ENCODE measurements at regions of chr17 and their contacts with region 1.

Region 1: DNA sequence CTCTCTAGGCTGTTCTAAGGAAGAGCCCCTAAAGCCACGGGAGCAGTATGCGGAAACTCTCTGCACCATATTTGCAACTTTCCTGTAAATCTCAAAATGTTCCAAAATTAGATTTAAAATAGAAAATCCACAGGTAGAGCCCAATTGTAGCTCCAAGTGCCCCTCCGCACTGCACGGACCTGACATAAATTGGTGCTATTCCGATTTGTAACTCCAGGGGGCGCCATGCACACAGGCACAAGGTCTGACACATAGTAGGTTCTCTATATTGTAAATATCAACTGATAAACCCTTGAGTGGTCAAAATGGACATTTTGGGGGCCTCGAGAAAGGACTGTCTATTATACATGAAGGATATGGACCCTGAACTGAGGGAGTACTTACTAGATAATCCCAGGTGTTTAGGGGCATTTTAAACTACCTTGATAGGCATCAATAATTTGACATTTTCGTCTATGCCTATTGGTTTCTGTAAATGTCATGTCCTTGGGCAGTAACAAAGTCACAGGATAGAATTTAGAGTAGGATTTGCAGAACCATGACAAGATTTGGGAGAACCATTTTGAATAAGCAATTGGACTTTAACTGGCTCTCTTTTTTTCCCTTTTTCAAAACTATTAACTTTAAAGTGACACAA is 36.6 kb upstream of the TMEM132E start:
- DNase-seq: peak in 5 of 10 donors; percentile 32 to 86 (median 47)

Region 2: DNA sequence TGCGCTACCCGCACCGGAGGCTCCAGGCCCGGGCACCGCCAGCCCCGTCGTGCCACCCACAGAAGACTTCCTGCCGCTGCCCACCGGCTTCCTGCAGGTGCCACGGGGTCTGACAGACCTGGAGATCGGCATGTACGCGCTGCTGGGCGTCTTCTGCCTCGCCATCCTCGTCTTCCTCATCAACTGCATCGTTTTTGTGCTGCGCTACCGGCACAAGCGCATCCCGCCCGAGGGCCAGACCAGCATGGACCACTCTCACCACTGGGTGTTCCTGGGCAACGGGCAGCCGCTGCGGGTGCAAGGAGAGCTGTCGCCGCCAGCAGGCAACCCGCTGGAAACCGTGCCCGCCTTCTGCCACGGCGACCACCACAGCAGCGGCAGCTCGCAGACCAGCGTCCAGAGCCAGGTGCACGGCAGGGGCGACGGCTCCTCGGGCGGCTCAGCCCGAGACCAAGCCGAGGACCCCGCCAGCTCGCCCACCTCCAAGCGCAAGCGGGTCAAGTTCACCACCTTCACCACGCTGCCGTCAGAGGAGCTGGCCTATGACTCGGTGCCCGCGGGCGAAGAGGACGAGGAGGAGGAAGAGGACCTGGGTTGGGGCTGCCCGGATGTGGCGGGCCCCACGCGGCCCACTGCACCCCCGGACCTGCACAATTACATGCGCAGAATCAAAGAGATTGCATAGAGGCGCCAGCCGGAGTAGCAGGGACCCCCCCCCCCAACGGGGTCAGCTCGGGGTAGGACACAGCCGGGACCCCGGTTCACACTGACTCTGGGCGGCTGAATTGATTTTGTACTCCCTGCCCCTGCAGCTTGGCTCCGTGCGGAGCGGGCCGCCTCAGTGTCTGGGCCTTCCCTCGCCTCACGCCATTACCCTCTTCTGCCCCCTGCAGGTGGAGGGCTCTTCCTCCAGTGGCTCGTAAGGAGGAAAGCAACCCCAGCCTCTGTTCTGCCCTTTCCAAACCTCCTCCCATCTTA is 95.0 kb after region 1 on chr17:
- intact Hi-C with region 1: loop called (anchors 1 kb)
- DNase-seq: peak; percentile 36 to 96 (median 74)

Region 3: DNA sequence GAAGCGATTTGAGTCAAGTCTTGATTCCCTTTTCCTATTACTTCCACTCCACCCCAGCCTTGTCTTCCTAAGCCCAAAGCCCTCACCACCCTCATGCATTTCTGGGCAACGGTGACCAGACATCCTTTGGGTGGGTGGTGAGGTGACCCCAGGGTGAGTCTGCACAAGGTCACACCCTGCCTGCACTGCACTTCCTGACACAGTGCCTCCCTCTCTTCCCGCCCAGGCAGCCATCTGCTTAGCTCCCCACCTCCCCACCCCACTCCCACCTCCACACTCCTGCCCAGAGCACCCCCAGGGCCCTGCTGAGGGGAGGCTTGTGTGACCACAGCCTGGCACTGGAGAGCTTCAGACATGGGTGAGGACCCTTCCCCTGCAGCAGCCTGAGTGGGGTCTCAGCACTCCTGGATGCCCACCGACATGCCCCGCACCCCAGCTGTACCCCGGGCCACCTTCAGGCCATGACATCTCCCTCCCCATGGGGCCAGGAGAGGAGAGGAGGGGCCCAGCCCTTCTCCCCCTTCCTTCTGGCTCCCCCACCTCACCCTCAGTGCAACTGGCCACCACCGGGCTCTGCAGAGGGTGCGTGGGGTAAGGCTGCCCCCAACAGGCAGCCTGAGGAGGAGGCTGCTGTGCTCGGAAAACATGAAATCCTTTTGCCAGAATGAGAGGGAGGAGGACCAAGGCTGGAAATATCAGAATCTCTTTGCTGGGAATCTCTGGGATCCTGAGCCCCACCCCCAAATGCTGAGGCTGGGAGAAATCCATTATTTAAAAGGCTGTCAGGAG is 349.8 kb after region 1 on chr17:
- intact Hi-C with region 1: loop called (anchors 5 kb)
- DNase-seq: peak in 7 of 10 donors; percentile 30 to 89 (median 53)

Region 4: DNA sequence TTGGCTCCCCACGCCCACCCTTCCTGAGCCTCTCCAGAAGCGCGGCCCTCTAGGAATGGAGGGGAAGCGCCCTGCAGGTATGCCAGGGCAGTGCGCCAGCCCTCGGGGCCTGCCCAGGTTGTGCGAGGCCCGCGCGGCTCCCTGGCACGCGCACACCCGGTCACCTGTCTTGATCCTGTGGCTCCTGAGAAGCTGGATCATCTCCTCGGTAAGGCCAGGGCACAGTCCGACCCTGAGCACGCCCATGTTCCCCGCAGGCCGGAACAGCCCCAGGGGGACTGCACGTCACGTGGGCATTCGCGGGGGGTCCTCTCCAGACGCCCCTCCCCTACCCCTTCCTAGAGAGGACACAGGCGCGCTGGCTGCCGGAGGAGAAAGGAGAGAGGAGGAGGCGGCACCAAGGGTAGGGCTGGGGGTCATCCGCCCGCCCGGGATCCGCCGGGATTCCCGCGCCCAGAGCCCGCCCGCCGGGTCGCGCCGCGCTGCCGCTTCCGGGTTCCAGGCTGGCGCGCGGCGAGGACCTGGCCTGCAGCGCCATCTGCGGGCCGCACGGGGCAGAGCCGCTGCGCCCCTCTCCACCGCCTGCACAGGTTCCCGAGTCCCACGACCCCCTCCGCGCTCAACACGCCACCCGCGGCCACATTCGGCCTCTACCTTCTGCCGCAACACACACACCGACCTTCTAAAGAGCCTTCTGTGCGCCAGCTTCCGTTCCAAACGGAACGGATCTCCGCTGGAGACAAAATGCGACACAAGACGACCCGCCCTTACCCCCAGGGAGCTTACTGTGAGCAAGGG is 576.7 kb after region 1 on chr17 and contains the start of gene RAD51D:
- intact Hi-C with region 1: loop called (anchors 5 kb)
- DNase-seq: peak; percentile 42 to 96 (median 68)